H1 (cell line): ENCODE measurements at regions of chr6 and their contacts with region 1.

Region 1: GRCh38 chr6:17200395-17200794 is 80.8 kb upstream of the RBM24 start:
- DNase-seq: peak; percentile 59 to 90
- H3K4me3 ChIP-seq: peak overlapping the region in 3 of 4 experiments; percentile 16 to 46 (median 26); a peak in 3 of 8 replicates
- H3K27ac ChIP-seq: no peak overlapping the region
- H3K4me1 ChIP-seq: no peaks in the 10 kb centered on the region; a peak in 2 of 7 replicates
- H3K27me3 ChIP-seq: peaks cover 2 to 11% (median 5%) of the 10 kb centered on the region in 4 experiments; a peak in 5 of 7 replicates
- CTCF ChIP-seq: peak; percentile 67 to 74 (median 71)
- EP300 ChIP-seq: no peak
- POLR2A ChIP-seq: no peak
- RAD21 ChIP-seq: peak; percentile 48 to 60

Region 2: DNA sequence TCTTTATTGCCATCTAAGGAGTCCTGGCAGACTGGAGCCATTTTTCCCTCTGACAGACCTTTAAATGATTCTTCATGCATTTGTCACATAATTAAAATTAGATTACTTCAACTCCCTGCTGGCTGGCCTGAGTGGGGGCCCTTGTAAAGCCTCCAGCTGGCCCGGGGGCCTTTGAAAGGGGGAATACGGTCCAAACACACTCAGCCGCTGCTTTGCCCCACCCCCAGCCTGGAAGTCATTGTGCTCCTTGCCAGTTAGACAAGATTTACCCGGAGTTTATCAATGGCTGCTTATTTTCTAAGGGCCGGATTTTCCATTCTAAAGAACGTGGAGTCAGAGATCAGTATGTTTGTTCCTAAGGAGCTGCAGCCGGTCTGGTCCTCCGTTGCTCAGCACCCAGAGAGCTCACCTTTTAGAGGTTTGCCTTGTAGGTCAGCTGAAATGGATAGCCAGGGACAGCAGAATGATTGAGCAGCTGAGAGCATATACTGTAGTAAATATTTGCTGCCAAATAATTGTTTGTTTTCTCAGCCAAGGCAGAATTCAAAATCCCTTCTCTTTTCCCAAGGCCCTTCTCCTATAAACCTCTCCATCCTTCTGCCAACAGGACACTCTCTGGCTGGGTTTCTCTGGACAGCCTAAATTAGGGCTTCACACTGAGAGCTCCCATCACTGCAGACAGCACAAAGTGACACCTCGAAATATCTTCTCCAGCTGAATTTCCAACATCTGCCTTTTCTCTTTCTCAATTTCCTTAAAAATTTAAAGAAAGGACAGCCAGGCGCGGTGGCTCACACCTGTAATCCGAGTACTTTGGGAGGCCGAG is 12.4 kb after region 1 on chr6:
- CTCF ChIA-PET with region 1: interaction called, 10 read pairs
- POLR2A ChIA-PET with region 1: no interaction called
- DNase-seq: no peak
- H3K4me3 ChIP-seq: no peak overlapping the region
- H3K27ac ChIP-seq: no peak overlapping the region
- H3K4me1 ChIP-seq: no peaks in the 10 kb centered on the region; a peak in 2 of 7 replicates
- H3K27me3 ChIP-seq: no peaks in the 10 kb centered on the region
- CTCF ChIP-seq: no peak
- EP300 ChIP-seq: no peak
- POLR2A ChIP-seq: no peak
- RAD21 ChIP-seq: no peak